Natural killer cell (primary cell): ENCODE measurements at regions of chr9 and their contacts with region 1.

Region 1: GRCh38 chr9:112218908-112219307 is 43.8 kb upstream of the SUSD1 start:
- DNase-seq: peak in 1 of 2 donors; percentile 35
- ATAC-seq: peak; percentile 73 to 92 (median 90)
- H3K4me3 ChIP-seq: no peak overlapping the region
- H3K4me3 Mint-ChIP-seq: peak overlapping the region; percentile 80
- H3K27ac ChIP-seq: peak overlapping the region; percentile 63
- H3K27ac Mint-ChIP-seq: peak overlapping the region; percentile 88 to 93
- H3K4me1 ChIP-seq: no peaks in the 10 kb centered on the region
- H3K4me1 Mint-ChIP-seq: peaks cover 20 to 24% of the 10 kb centered on the region in 2 donors
- H3K27me3 ChIP-seq: no peaks in the 10 kb centered on the region
- H3K27me3 Mint-ChIP-seq: no peaks in the 10 kb centered on the region
- CTCF ChIP-seq: no peak

Region 2: GRCh38 chr9:112180387-112180881 is 38.5 kb before region 1 on chr9:
- intact Hi-C with region 1: loop called (anchors 2 kb)
- DNase-seq: peak; percentile 42 to 80
- ATAC-seq: peak; percentile 76 to 89 (median 86)
- H3K4me3 ChIP-seq: no peak overlapping the region
- H3K4me3 Mint-ChIP-seq: peak overlapping the region; percentile 78
- H3K27ac ChIP-seq: peak overlapping the region; percentile 49
- H3K27ac Mint-ChIP-seq: peak overlapping the region; percentile 77 to 91
- H3K4me1 ChIP-seq: peaks cover 49% of the 10 kb centered on the region
- H3K4me1 Mint-ChIP-seq: peaks cover 55 to 56% of the 10 kb centered on the region in 2 donors
- H3K27me3 ChIP-seq: no peaks in the 10 kb centered on the region
- H3K27me3 Mint-ChIP-seq: no peaks in the 10 kb centered on the region
- CTCF ChIP-seq: no peak

Region 3: GRCh38 chr9:112194969-112195431 is 23.9 kb before region 1 on chr9:
- intact Hi-C with region 1: no loop called
- DNase-seq: no peak
- ATAC-seq: peak in 1 of 3 donors; percentile 58
- H3K4me3 ChIP-seq: no peak overlapping the region
- H3K4me3 Mint-ChIP-seq: no peak overlapping the region
- H3K27ac ChIP-seq: no peak overlapping the region
- H3K27ac Mint-ChIP-seq: peak overlapping the region in 1 of 2 donors; percentile 31
- H3K4me1 ChIP-seq: no peaks in the 10 kb centered on the region
- H3K4me1 Mint-ChIP-seq: peaks cover 10 to 11% of the 10 kb centered on the region in 2 donors
- H3K27me3 ChIP-seq: no peaks in the 10 kb centered on the region
- H3K27me3 Mint-ChIP-seq: no peaks in the 10 kb centered on the region
- CTCF ChIP-seq: no peak

Region 4: DNA sequence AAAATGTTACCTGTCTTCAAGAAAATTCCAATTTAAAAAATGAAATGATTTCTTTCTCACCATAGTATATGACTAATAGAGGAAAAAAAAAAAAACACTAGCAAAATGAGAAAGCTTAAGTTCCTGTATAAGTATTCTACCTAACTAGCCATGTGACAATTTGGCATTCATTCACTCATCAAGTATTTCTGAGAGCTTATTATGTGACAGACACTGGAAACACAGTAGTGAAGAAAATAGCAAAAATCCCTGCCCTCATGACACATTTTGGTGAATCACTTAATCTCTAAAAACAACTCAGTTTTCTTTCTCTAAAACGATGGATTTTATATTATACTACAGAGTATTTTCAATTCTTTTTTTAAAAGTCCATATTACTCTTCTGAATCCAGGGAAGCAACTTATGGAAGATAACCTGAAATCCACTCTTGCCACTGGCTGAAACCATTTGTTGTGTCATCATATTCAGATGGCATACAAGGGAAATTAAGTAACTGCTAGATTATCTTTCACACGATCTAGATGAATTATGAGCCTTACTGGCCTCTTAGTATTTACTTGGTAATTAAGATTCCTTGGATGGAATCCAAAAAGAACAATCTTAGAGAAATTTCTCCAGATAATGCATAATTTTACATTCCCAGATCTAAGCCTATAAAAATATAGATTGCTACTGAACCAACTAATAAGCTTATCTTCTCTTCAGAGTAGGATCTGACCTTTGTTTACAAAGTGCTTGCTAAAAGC is 109.0 kb after region 1 on chr9:
- intact Hi-C with region 1: loop called (anchors 10 kb)
- DNase-seq: peak in 1 of 2 donors; percentile 19
- ATAC-seq: peak; percentile 38 to 53 (median 47)
- H3K4me3 ChIP-seq: no peak overlapping the region
- H3K4me3 Mint-ChIP-seq: peak overlapping the region; percentile 37
- H3K27ac ChIP-seq: no peak overlapping the region
- H3K27ac Mint-ChIP-seq: peak overlapping the region; percentile 85 to 87
- H3K4me1 ChIP-seq: peaks cover 15% of the 10 kb centered on the region
- H3K4me1 Mint-ChIP-seq: peaks cover 74 to 76% of the 10 kb centered on the region in 2 donors
- H3K27me3 ChIP-seq: no peaks in the 10 kb centered on the region
- H3K27me3 Mint-ChIP-seq: no peaks in the 10 kb centered on the region
- CTCF ChIP-seq: no peak